Heart right ventricle (tissue), 16 donors: ENCODE measurements at regions of chr9 and their contacts with region 1.

Region 1: GRCh38 chr9:69056191-69056815 is 20.8 kb downstream of the FXN start:
- DNase-seq: no peak
- ATAC-seq: no peak
- H3K4me3 ChIP-seq: no peak overlapping the region
- H3K27ac ChIP-seq: no peak overlapping the region
- H3K4me1 ChIP-seq: peaks cover 0 to 7% (median 0%) of the 10 kb centered on the region in 9 donors
- H3K27me3 ChIP-seq: no peaks in the 10 kb centered on the region
- CTCF ChIP-seq: no peak

Region 2: DNA sequence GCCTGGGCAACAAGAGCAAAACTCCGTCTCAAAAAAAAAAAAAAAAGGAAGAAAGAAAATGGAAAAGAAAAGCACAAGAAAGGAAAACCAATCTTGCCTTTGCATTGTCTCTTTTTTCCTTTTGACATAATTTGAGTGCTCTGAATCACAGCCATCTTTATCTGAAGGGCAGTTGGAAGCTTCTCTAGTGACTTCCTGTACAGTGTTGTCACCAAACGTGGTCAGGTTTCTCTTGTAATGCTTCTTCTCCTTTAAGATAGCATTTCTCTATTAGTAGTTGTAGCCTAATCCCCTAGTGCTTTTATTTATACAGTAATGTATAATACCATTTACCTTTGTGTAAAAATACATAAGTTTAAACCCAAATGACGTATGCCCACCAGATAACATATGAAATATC is 60.5 kb before region 1 on chr9:
- intact Hi-C with region 1: no loop called
- DNase-seq: no peak
- ATAC-seq: no peak
- H3K4me3 ChIP-seq: no peak overlapping the region
- H3K27ac ChIP-seq: peak overlapping the region in 3 of 10 donors; percentile 29 to 58 (median 47)
- H3K4me1 ChIP-seq: peaks cover 0 to 45% (median 20%) of the 10 kb centered on the region in 9 donors
- H3K27me3 ChIP-seq: no peaks in the 10 kb centered on the region
- CTCF ChIP-seq: no peak

Region 3: GRCh38 chr9:69093471-69094103 is 37.3 kb after region 1 on chr9:
- intact Hi-C with region 1: loop called in 1 of 10 experiments (anchors 5 kb)
- DNase-seq: no peak
- ATAC-seq: no peak
- H3K4me3 ChIP-seq: no peak overlapping the region
- H3K27ac ChIP-seq: no peak overlapping the region
- H3K4me1 ChIP-seq: peaks cover 0 to 24% (median 9%) of the 10 kb centered on the region in 9 donors
- H3K27me3 ChIP-seq: no peaks in the 10 kb centered on the region
- CTCF ChIP-seq: no peak

Region 4: GRCh38 chr9:69115621-69116020 is 59.3 kb after region 1 on chr9:
- intact Hi-C with region 1: loop called in 2 of 10 experiments (anchors 5 to 10 kb)
- DNase-seq: no peak
- ATAC-seq: no peak
- H3K4me3 ChIP-seq: no peak overlapping the region
- H3K27ac ChIP-seq: no peak overlapping the region
- H3K4me1 ChIP-seq: peaks cover 0 to 3% (median 3%) of the 10 kb centered on the region in 9 donors
- H3K27me3 ChIP-seq: no peaks in the 10 kb centered on the region
- CTCF ChIP-seq: no peak

Region 5: DNA sequence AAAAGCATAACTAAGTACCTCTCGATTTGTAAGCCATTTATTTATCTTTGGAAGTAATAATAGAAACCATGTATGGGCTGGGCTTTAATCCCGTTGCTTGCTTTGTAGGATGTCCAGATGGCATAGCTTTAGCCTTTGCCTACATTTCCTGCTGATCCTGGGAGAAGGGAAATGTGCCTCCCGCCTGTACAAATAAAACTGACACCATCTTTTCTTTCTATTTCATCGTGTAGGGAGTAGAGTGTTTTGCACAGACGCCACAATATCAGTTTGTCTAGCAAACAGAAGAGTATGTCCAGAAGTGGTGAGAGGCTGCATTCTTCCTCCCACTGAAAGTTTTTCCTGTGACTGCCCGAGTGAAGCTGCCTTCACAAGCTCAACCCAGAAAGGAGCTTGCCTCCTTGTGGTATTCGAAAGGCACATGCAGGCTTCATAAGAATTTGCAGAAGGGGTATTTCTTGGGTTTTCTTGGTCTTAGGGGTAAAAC is 93.1 kb after region 1 on chr9:
- intact Hi-C with region 1: loop called in 4 of 10 experiments (anchors 10 kb)
- DNase-seq: peak in 1 of 2 donors; percentile 28
- ATAC-seq: peak in 7 of 8 donors; percentile 34 to 77 (median 65)
- H3K4me3 ChIP-seq: peak overlapping the region in 2 of 10 donors; percentile 7 to 9
- H3K27ac ChIP-seq: peak overlapping the region in 9 of 10 donors; percentile 0 to 73 (median 60)
- H3K4me1 ChIP-seq: peaks cover 4 to 29% (median 14%) of the 10 kb centered on the region in 9 donors
- H3K27me3 ChIP-seq: no peaks in the 10 kb centered on the region
- CTCF ChIP-seq: peak in 7 of 9 donors; percentile 14 to 60 (median 34)